Activated CD8-positive, alpha-beta T cell treated with anti-CD3 and anti-CD28 coated beads for 36 hours (primary cell): ENCODE measurements at regions of chr17 and their contacts with region 1.

Region 1: GRCh38 chr17:29722411-29723198 is 99.9 kb upstream of the CORO6 start:
- DNase-seq: peak; percentile 37
- ATAC-seq: peak; percentile 57
- H3K4me3 Mint-ChIP-seq: peak overlapping the region; percentile 30
- H3K27ac Mint-ChIP-seq: peak overlapping the region; percentile 66
- H3K4me1 Mint-ChIP-seq: peaks cover 77% of the 10 kb centered on the region
- H3K27me3 Mint-ChIP-seq: no peaks in the 10 kb centered on the region
- CTCF ChIP-seq: no peak

Region 2: DNA sequence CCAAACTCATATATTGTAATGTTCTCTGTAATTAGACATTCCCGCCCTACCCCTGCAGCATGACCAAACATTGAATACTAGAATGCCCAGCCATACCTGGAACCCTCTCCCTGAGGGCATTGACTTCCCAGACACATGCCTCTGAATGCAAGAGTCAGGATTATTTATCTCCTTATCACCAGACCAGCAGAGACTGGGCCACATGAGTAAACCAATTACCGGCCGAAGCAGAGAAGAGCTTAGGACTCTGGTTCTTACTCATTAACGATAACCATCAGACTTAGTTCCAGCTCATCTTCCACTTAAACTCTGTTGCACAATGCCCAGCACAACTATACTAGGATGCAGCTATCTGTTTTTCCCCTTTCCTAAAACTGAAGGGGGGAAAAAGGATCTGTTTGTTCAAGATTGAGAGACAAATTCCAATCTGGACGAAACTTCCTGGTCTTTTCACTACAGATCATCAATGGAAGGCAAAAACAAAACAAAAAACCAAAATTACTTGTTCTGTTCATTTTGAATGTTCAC is 11.7 kb before region 1 on chr17:
- CTCF ChIA-PET with region 1: interaction called, 17 read pairs
- POLR2A ChIA-PET with region 1: interaction called, 20 read pairs
- intact Hi-C with region 1: no loop called
- DNase-seq: no peak
- ATAC-seq: no peak
- H3K4me3 Mint-ChIP-seq: no peak overlapping the region
- H3K27ac Mint-ChIP-seq: peak overlapping the region; percentile 10
- H3K4me1 Mint-ChIP-seq: peaks cover 63% of the 10 kb centered on the region
- H3K27me3 Mint-ChIP-seq: no peaks in the 10 kb centered on the region
- CTCF ChIP-seq: no peak

Region 3: GRCh38 chr17:29732613-29733012 is 10.0 kb after region 1 on chr17:
- CTCF ChIA-PET with region 1: interaction called, 12 read pairs
- POLR2A ChIA-PET with region 1: interaction called, 3 read pairs
- intact Hi-C with region 1: no loop called
- DNase-seq: no peak
- ATAC-seq: no peak
- H3K4me3 Mint-ChIP-seq: no peak overlapping the region
- H3K27ac Mint-ChIP-seq: peak overlapping the region; percentile 53
- H3K4me1 Mint-ChIP-seq: peaks cover 55% of the 10 kb centered on the region
- H3K27me3 Mint-ChIP-seq: no peaks in the 10 kb centered on the region
- CTCF ChIP-seq: no peak